ENCODE measurements at regions of chr6 and their contacts with region 1.

Region 1: GRCh38 chr6:11496152-11497060 is 41.1 kb upstream of the TMEM170B start:
- DNase-seq: peak in 1 of 2 donors; percentile 22
- ATAC-seq: peak; percentile 81 to 97 (median 88)
- H3K4me3 ChIP-seq: no peak overlapping the region
- H3K27ac ChIP-seq: no peak overlapping the region
- H3K4me1 ChIP-seq: no peaks in the 10 kb centered on the region
- H3K27me3 ChIP-seq: no peaks in the 10 kb centered on the region
- CTCF ChIP-seq: peak; percentile 84

Region 2: DNA sequence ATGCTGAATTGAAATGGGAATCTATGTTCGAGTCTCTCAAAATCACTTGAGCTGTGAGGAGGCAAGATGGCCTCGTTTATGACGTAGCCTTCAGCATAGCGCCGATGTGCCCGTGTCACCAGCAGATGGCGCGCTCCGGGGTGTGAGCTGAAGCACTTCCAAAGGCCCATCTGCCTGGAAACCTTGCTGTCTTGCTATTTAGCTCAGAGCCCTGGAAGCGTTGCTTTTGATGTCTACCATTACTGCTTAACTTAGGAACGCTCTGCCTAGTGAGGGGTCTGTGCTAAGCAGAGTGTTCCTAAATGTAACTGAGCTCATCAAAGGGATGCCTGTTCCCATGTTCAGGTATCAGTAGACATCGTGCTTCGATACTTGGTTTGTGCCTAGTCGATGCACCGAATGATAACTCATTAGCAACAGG is 541.8 kb before region 1 on chr6:
- intact Hi-C with region 1: loop called (anchors 5 to 10 kb)
- DNase-seq: peak; percentile 55 to 77
- ATAC-seq: no peak
- H3K4me3 ChIP-seq: no peak overlapping the region
- H3K27ac ChIP-seq: no peak overlapping the region
- H3K4me1 ChIP-seq: no peaks in the 10 kb centered on the region
- H3K27me3 ChIP-seq: no peaks in the 10 kb centered on the region
- CTCF ChIP-seq: peak; percentile 43

Region 3: GRCh38 chr6:11144393-11144851 is 352.0 kb before region 1 on chr6:
- intact Hi-C with region 1: loop called (anchors 2 kb)
- DNase-seq: peak; percentile 71 to 85
- ATAC-seq: peak; percentile 77 to 96 (median 90)
- H3K4me3 ChIP-seq: no peak overlapping the region
- H3K27ac ChIP-seq: no peak overlapping the region
- H3K4me1 ChIP-seq: no peaks in the 10 kb centered on the region
- H3K27me3 ChIP-seq: no peaks in the 10 kb centered on the region
- CTCF ChIP-seq: peak; percentile 87

Region 4: GRCh38 chr6:11172501-11173332 is 323.7 kb before region 1 on chr6:
- intact Hi-C with region 1: loop called (anchors 2 to 10 kb)
- DNase-seq: peak; percentile 69 to 76
- ATAC-seq: peak in 1 of 4 donors; percentile 60
- H3K4me3 ChIP-seq: no peak overlapping the region
- H3K27ac ChIP-seq: no peak overlapping the region
- H3K4me1 ChIP-seq: no peaks in the 10 kb centered on the region
- H3K27me3 ChIP-seq: no peaks in the 10 kb centered on the region
- CTCF ChIP-seq: peak; percentile 80

Region 5: GRCh38 chr6:11241793-11242201 is 254.6 kb before region 1 on chr6:
- intact Hi-C with region 1: loop called in 1 of 2 experiments (anchors 5 kb)
- DNase-seq: peak; percentile 66 to 69
- ATAC-seq: peak; percentile 48 to 86 (median 76)
- H3K4me3 ChIP-seq: no peak overlapping the region
- H3K27ac ChIP-seq: no peak overlapping the region
- H3K4me1 ChIP-seq: no peaks in the 10 kb centered on the region
- H3K27me3 ChIP-seq: no peaks in the 10 kb centered on the region
- CTCF ChIP-seq: peak; percentile 38

Region 6: GRCh38 chr6:11537229-11538051 is 41.0 kb after region 1 on chr6 and contains the start of gene TMEM170B:
- intact Hi-C with region 1: no loop called
- DNase-seq: peak; percentile 95 to 98
- ATAC-seq: peak; percentile 94 to 98 (median 96)
- H3K4me3 ChIP-seq: peak within 1 kb of the TSS; percentile 92
- H3K27ac ChIP-seq: peak within 1 kb of the TSS; percentile 83
- H3K4me1 ChIP-seq: peaks cover 15% of the 10 kb centered on the region
- H3K27me3 ChIP-seq: no peaks in the 10 kb centered on the region
- CTCF ChIP-seq: no peak
- total RNA-seq, gene TMEM170B: 7.4 to 20.0 (median 10.0) TPM

Measured in psoas muscle (tissue), 8 donors.